Activated CD8-positive, alpha-beta T cell treated with anti-CD3 and anti-CD28 coated beads, Interleukin-2, amount 10 ng/mL, durations not matched to agents 7 days and 5 days (primary cell): ENCODE measurements at regions of chr18 and their contacts with region 1.

Region 1: DNA sequence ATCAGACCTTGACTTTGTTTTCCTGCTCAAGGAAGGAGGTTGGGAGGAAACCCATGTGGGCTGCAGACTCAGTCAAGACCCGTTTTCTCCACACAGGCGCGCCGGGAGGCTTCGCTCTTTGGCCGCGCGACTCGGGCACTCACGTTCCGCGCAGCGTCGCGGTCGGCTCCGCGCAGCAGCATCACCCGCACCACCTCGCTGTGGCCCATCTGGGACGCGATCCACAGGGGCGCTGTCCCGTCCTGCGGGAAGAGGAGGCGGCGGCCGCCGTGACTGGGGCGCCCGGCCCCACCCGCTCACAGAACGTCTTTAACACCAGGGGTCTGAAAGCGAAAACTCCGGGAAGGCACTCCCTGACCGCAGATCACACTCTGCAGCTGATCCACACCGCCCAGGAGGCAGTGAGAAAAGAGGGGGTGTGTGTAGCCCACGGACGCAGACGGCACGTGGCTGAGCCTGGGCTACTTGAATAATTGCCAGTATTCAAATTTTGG is 33.1 kb upstream of the NPC1 start:
- DNase-seq: no peak
- ATAC-seq: peak; percentile 63
- H3K4me3 Mint-ChIP-seq: peak overlapping the region; percentile 38
- H3K27ac Mint-ChIP-seq: no peak overlapping the region
- H3K4me1 Mint-ChIP-seq: peaks cover 10% of the 10 kb centered on the region
- H3K27me3 Mint-ChIP-seq: peaks cover 52% of the 10 kb centered on the region

Region 2: GRCh38 chr18:23578891-23579653 is 40.4 kb before region 1 on chr18:
- CTCF ChIA-PET with region 1: no interaction called
- POLR2A ChIA-PET with region 1: no interaction called
- DNase-seq: no peak
- ATAC-seq: no peak
- H3K4me3 Mint-ChIP-seq: no peak overlapping the region
- H3K27ac Mint-ChIP-seq: peak overlapping the region; percentile 47
- H3K4me1 Mint-ChIP-seq: peaks cover 52% of the 10 kb centered on the region
- H3K27me3 Mint-ChIP-seq: no peaks in the 10 kb centered on the region

Region 3: DNA sequence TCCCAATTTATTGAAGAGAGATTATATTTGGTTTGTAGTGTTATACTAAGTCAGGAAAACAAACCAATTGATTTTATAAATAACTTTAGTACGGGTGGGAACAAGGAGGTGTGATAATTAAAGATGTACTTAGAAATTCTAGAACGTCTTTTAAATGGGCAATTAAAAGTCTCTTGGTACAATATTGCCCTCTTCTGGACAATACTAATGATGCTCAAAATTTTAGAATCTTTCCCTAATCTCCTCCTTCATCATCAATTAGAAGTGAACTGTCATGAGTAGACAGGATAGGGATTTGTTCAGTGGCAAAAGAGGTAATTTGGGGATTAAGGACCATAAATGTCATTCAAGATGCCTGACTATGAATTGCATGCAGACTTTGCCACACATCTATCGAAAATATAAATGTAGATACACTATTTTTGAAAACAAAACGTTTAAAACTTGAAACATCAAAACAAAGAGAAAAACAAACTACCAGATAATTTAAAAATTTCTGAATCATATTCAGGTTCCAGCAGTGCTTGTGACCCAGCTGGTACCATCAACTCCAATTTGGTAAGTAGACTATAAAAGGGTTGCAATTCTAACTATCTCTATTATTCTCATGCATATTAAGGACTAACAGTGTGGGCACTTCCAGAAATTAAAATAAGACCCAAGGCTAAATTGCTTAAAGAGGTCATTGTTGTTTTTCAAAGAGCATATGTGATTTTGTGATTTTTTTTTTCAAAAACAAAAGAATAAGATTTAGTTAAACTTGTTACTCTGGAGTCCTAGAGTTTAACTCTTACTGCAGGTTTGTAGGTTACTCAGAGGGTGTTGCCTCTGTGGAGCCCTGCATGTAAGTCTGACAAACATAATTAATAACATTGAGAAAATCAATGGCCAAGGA is 193.4 kb after region 1 on chr18:
- CTCF ChIA-PET with region 1: interaction called, 23 read pairs
- POLR2A ChIA-PET with region 1: no interaction called
- DNase-seq: no peak
- ATAC-seq: no peak
- H3K4me3 Mint-ChIP-seq: no peak overlapping the region
- H3K27ac Mint-ChIP-seq: no peak overlapping the region
- H3K4me1 Mint-ChIP-seq: peaks cover 34% of the 10 kb centered on the region
- H3K27me3 Mint-ChIP-seq: peaks cover 20% of the 10 kb centered on the region